HCT116 (cell line): ENCODE measurements at regions of chr7 and their contacts with region 1.

Region 1: DNA sequence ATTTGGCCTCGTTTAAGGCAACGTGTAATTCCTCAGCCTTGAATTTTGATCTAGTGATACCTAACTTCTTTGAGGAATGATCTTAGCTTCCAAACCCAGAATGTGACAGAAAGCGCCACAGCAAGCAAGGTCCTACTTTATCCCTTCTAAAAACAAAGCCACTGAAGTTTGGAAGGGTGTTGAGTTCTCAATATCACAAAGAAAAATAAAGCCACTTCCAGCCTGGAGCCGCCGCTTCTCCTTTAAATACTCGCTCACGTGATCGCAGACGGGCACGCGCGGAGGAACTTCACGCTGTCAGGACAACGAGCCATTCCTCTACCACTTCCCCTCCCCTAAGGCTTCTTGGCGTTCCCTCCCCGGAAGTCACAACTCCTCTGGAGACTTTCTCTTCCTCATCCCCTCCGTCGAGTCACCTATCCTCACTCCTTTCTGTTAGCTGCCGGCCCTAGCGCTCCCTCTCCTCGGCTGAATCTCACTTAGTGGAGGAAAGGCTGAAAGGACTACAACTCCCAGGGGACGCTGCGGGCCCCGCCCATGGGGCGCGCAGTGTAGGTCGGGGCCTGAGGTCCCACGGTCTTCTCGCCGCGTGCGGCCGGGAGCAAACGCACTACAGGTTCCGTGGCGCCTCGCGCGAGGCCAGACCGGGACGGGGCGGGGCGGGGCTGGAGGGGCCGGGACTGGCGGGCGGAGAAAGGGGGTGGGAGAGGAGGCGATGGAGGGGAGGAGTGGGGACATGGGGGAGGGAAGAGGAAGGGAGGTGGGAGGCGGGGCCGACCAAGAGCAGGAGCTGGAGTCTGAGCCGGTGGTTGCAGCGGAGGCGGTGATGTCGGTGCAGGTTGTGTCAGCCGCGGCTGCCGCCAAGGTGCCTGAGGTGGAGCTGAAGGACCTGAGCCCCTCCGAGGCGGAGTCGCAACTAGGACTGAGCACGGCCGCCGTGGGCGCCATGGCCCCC is at the start of gene AHCYL2:
- DNase-seq: peak; percentile 95
- ATAC-seq: peak; percentile 94
- H3K4me3 ChIP-seq: peak within 1 kb of the TSS; percentile 80 to 94
- H3K27ac ChIP-seq: peak within 1 kb of the TSS; percentile 71
- H3K4me1 ChIP-seq: peaks cover 9 to 24% of the 10 kb centered on the region in 2 experiments; a peak in 3 of 4 replicates
- H3K27me3 ChIP-seq: no peaks in the 10 kb centered on the region
- CTCF ChIP-seq: no peak
- POLR2A ChIP-seq: peak; percentile 43
- RAD21 ChIP-seq: no peak
- total RNA-seq, gene AHCYL2: 17.0 TPM

Region 2: DNA sequence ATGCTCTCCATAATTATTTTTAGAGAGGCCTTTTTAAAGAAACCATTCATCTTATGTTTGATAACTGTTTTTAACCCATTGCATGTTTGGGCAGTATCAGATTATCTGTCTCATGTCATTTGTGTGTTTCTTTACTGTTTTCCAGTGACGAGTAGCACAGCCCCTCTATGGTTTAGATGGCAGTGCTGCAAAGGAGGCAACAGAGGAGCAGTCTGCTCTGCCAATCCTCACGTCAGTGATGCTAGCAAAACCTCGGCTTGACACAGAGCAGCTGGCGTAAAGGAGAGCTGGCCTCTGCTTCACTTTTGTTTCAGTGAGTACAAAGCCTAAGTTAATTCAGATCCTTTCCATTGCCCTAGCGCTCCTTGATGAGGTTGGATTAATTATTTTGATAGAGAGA is 632.8 kb before region 1 on chr7:
- CTCF ChIA-PET with region 1: no interaction called
- POLR2A ChIA-PET with region 1: no interaction called
- RAD21 ChIA-PET with region 1: no interaction called
- intact Hi-C with region 1: no loop called
- DNase-seq: no peak
- ATAC-seq: no peak
- H3K4me3 ChIP-seq: no peak overlapping the region
- H3K27ac ChIP-seq: no peak overlapping the region
- H3K4me1 ChIP-seq: no peaks in the 10 kb centered on the region
- H3K27me3 ChIP-seq: no peaks in the 10 kb centered on the region
- CTCF ChIP-seq: no peak
- POLR2A ChIP-seq: no peak
- RAD21 ChIP-seq: no peak

Region 3: GRCh38 chr7:129298268-129298893 is 73.9 kb after region 1 on chr7:
- CTCF ChIA-PET with region 1: interaction called, 48 read pairs
- POLR2A ChIA-PET with region 1: no interaction called
- RAD21 ChIA-PET with region 1: no interaction called
- intact Hi-C with region 1: loop called (anchors 2 kb)
- DNase-seq: peak; percentile 26
- ATAC-seq: peak; percentile 58; the same call in 1 of the 2 replicates
- H3K4me3 ChIP-seq: no peak overlapping the region
- H3K27ac ChIP-seq: no peak overlapping the region
- H3K4me1 ChIP-seq: peaks cover 4 to 11% of the 10 kb centered on the region in 2 experiments; a peak in 3 of 4 replicates
- H3K27me3 ChIP-seq: no peaks in the 10 kb centered on the region
- CTCF ChIP-seq: peak; percentile 75 to 89 (median 81)
- POLR2A ChIP-seq: no peak
- RAD21 ChIP-seq: peak; percentile 81